ENCODE measurements at regions of chr17 and their contacts with region 1.

Region 1: GRCh38 chr17:44115585-44116415 is 7.6 kb downstream of the HDAC5 start:
- DNase-seq: no peak
- ATAC-seq: no peak
- H3K4me3 ChIP-seq: no peak overlapping the region
- H3K27ac ChIP-seq: no peak overlapping the region
- H3K4me1 ChIP-seq: peaks cover 12% of the 10 kb centered on the region
- H3K27me3 ChIP-seq: no peaks in the 10 kb centered on the region
- CTCF ChIP-seq: peak; percentile 85

Region 2: DNA sequence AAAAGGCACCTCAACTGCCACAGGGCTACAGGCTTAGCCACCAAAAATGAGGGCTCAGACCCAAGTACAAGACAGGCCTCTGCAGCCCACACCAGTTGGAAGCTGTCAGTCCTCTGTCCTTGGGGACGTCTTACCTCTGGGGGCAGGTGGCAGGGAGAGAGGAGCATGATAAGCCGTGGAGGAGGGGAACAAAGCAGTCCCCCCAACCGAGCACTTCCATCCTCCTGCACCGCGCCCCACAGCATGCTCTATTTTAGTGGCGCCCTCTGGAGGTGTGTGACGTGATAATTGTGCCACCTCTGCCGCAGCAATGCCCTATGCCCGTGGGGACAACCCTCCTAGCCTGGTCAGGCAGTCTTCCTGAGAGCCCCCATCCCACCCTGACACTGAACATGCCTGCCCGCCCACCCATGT is 31.7 kb before region 1 on chr17:
- CTCF ChIA-PET with region 1: interaction called, 10 read pairs
- POLR2A ChIA-PET with region 1: no interaction called
- in situ Hi-C with region 1: no loop called
- intact Hi-C with region 1: no loop called
- DNase-seq: no peak
- ATAC-seq: 0 out of 2 replicates have a peak, but pooled peaks have one; percentile 28
- H3K4me3 ChIP-seq: no peak overlapping the region
- H3K27ac ChIP-seq: no peak overlapping the region
- H3K4me1 ChIP-seq: peaks cover 4% of the 10 kb centered on the region; the same call in 1 of the 2 replicates
- H3K27me3 ChIP-seq: no peaks in the 10 kb centered on the region
- CTCF ChIP-seq: no peak; the same call in 1 of the 2 replicates

Region 3: GRCh38 chr17:44184212-44184810 is 68.5 kb after region 1 on chr17:
- CTCF ChIA-PET with region 1: no interaction called
- POLR2A ChIA-PET with region 1: no interaction called
- in situ Hi-C with region 1: no loop called
- intact Hi-C with region 1: no loop called
- DNase-seq: no peak
- ATAC-seq: no peak
- H3K4me3 ChIP-seq: no peak overlapping the region
- H3K27ac ChIP-seq: no peak overlapping the region
- H3K4me1 ChIP-seq: peaks cover 7% of the 10 kb centered on the region; the same call in 1 of the 2 replicates
- H3K27me3 ChIP-seq: no peaks in the 10 kb centered on the region
- CTCF ChIP-seq: no peak

Measured in Panc1 (cell line).